ENCODE measurements at regions of chr20 and their contacts with region 1.

Region 1: DNA sequence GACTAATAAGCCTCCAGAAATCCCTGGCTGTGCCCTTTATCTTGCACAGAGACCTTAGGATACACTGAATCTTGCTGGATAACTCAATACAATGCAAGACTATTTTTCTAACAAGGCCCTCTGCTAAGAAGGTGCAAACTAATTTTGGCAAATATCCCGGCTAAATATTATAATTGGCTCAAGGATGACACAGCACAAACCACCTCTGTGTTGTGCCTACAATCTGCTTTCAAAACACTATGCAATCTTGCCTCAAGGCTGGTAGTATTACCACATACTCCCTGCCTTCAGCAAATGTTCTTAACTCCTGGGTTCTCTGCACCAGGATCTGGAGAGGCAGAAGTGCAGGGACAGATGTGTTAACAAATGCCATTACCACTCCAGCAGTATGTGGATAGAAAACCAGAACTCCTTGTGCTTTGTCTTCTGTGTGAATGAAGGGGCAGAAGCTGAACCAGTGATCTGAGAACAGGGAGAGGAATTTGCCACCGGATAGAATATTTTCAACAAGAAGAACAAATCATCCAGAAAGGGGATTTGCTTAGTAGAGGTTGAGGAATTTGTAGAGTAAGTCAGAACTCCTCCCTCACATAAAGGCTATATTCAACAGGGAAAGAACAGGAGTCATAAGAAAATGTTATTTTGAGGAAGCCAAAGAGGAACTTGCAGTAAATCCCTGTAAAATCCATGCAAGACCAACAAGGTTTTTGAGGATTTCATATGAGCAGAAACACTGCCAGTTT is 74.1 kb upstream of the SLC4A11 start:
- DNase-seq: peak; percentile 82
- H3K4me3 ChIP-seq: no peak overlapping the region
- H3K27ac ChIP-seq: no peak overlapping the region
- H3K4me1 ChIP-seq: peaks cover 13% of the 10 kb centered on the region
- H3K27me3 ChIP-seq: no peaks in the 10 kb centered on the region
- CTCF ChIP-seq: no peak
- POLR2A ChIP-seq: no peak

Region 2: DNA sequence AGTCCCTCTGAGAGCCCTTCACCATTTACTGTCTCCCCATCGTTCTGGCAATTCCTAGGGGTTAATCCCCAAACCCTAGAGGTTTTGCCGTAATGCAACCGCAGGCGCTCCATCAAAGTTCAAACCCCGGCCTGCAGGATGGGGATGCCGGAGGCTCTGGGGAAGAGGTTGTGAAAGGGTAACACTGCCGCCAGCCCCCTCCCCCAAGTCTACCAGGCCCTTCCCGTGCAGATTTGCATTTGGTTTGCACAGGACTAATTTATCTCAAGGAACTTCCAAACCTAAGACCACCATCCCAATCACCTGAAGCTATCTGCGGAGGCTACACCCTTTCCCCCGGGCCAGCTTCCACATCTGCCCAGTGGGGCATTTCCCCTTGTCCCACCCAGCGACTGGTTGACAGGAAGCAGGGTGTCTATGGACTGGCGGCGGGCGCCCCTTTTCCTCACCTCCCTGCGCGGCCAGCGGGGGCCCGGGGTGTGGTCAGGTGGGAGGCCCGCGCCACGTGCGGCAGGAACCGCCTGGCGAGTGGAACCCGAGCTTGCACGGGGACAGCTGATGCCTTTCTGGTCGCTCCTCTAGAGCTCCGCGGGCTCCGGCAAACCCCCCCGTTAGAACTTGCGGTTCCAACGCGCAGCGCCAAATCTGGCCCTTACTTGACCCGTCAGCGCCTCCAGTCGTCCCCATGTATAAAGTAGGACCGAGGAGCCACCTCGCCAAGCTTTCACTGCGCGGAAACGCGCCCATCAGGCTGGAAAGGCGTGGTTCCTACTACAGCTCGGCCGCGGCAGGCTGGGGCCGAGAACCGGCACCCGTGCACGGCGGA is 64.7 kb before region 1 on chr20:
- CTCF ChIA-PET with region 1: interaction called, 12 read pairs
- POLR2A ChIA-PET with region 1: no interaction called
- dilution Hi-C with region 1: no loop called
- intact Hi-C with region 1: no loop called
- DNase-seq: peak; percentile 38
- H3K4me3 ChIP-seq: peak overlapping the region in 2 of 3 experiments; percentile 37 to 43
- H3K27ac ChIP-seq: no peak overlapping the region
- H3K4me1 ChIP-seq: peaks cover 7% of the 10 kb centered on the region
- H3K27me3 ChIP-seq: peaks cover 0 to 11% of the 10 kb centered on the region in 2 experiments
- CTCF ChIP-seq: no peak
- POLR2A ChIP-seq: no peak

Region 3: DNA sequence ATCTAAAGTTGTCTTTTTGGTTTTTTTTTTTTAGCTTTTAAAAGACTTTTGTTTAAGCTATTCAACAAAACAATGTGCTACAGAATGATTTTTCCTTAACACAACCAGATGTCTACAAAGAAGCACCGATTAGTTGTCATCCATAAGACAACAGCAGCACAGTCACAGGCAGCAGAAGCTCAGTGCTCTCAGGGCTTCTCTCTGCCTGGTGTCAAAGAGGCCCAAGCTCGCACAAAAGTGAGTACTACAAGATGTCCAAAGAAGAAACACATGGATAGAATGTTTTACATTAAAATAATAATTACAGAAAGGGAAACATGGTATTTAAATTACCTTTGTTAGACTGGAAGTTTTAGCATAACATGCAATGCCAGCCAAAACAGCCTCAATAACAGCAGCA is 12.8 kb after region 1 on chr20:
- CTCF ChIA-PET with region 1: interaction called, 11 read pairs
- POLR2A ChIA-PET with region 1: no interaction called
- dilution Hi-C with region 1: no loop called
- intact Hi-C with region 1: no loop called
- DNase-seq: no peak
- H3K4me3 ChIP-seq: no peak overlapping the region
- H3K27ac ChIP-seq: no peak overlapping the region
- H3K4me1 ChIP-seq: no peaks in the 10 kb centered on the region
- H3K27me3 ChIP-seq: no peaks in the 10 kb centered on the region
- CTCF ChIP-seq: no peak
- POLR2A ChIP-seq: no peak

Measured in endothelial cell of umbilical vein (primary cell).